WTC11 (cell line): ENCODE measurements at regions of chr6 and their contacts with region 1.

Region 1: DNA sequence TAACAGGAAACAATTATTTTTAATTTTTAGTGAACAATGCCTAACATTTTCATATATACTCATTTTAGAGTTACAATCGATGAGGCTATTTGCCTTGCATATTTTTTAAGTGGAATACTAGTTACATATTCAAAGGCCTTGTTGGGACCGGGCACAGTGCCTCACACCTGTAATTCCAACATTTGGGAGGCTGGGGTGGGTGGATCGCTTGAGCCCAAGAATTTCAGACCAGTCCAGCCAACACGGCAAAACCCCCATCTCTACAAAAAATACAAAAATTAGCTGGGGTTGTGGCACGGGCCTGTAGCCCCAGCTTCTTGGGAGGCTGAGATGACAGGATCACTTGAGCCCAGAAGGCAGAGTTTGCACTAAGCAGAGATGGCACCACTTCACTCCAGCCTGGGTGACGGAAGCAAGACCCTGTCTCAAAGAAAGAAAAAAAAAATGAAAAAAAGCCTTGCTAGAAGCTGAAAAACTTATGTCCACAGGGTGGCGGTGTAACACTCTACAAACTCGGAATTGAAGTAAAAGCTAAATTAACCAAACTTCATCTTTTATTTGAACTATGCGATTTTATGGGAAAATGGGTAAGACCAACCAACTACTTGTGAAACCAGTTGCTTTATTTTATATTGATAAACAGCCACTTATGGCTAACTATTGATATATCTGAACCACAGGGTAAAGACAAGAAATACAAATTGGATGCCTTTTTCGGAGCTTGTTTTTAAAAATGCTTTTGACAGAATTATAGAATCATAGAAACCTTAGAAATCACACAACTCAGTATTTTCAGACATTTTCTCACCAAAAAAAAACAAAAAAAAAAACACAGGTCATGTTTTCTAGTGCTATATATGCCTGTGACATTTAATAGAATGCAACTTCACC is 24.1 kb upstream of the ROS1 start:
- DNase-seq: peak; percentile 33
- ATAC-seq: peak; percentile 68
- H3K4me3 Mint-ChIP-seq: no peak overlapping the region; the same call in 1 of the 2 replicates
- H3K27ac Mint-ChIP-seq: no peak overlapping the region
- H3K4me1 Mint-ChIP-seq: peaks cover 21% of the 10 kb centered on the region
- H3K27me3 Mint-ChIP-seq: no peaks in the 10 kb centered on the region
- CTCF ChIP-seq: peak; percentile 55

Region 2: GRCh38 chr6:117215353-117216090 is 234.3 kb before region 1 on chr6:
- CTCF ChIA-PET with region 1: no interaction called
- POLR2A ChIA-PET with region 1: no interaction called
- DNase-seq: no peak
- ATAC-seq: no peak
- H3K4me3 Mint-ChIP-seq: no peak overlapping the region
- H3K27ac Mint-ChIP-seq: no peak overlapping the region
- H3K4me1 Mint-ChIP-seq: no peaks in the 10 kb centered on the region
- H3K27me3 Mint-ChIP-seq: peaks cover 4% of the 10 kb centered on the region; the same call in 1 of the 2 replicates
- CTCF ChIP-seq: no peak

Region 3: GRCh38 chr6:117425431-117426153 is 24.2 kb before region 1 on chr6 and contains the start of gene ROS1:
- CTCF ChIA-PET with region 1: no interaction called
- POLR2A ChIA-PET with region 1: no interaction called
- DNase-seq: no peak
- ATAC-seq: no peak
- H3K4me3 Mint-ChIP-seq: no peak within 1 kb of the TSS
- H3K27ac Mint-ChIP-seq: no peak within 1 kb of the TSS
- H3K4me1 Mint-ChIP-seq: no peaks in the 10 kb centered on the region
- H3K27me3 Mint-ChIP-seq: no peaks in the 10 kb centered on the region; the same call in 1 of the 2 replicates
- CTCF ChIP-seq: no peak
- total RNA-seq, gene ROS1: 0.02 to 0.05 TPM (median 0.05 TPM) in 3 replicates

Region 4: DNA sequence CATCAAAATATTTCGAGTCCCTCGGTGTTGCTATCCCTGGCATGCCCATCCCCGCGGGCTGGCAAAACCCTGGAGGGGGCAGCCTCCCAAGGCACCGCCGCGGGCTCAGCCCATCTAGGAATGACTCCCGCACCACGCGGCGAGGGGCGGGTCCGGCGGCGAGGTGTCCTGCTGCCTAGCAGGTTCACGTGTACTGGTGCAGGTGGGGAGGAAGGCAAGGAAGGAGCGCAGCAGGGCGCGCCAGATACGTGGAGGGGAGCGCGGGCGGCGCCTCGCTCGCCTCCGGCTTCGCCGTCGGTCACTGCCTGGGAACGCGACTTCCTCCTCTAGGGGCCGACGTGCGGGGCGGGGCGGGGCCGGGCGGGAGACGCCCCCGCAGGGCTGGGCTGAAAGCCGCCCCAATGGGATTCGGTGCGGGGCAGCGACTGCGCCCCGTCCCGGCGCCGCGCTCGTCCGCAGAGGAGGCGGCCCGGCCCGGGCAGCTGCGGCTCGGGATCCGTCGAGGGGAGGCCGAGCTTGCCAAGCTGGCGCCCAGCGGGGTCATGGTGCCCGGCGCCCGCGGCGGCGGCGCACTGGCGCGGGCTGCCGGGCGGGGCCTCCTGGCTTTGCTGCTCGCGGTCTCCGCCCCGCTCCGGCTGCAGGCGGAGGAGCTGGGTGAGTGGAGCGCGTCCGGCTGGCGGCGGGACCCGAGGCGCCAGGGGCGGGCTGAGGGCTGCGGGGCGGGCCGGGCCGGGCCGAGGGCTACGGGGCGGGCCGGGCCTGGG is 32.6 kb after region 1 on chr6 and contains the start of gene DCBLD1:
- CTCF ChIA-PET with region 1: interaction called, 11 read pairs
- POLR2A ChIA-PET with region 1: no interaction called
- DNase-seq: peak; percentile 78
- ATAC-seq: peak; percentile 69
- H3K4me3 Mint-ChIP-seq: peak within 1 kb of the TSS; percentile 87
- H3K27ac Mint-ChIP-seq: peak within 1 kb of the TSS; percentile 74
- H3K4me1 Mint-ChIP-seq: peaks cover 48% of the 10 kb centered on the region
- H3K27me3 Mint-ChIP-seq: peaks cover 24% of the 10 kb centered on the region
- CTCF ChIP-seq: no peak
- total RNA-seq, gene DCBLD1: 9.6 to 11.2 TPM (median 10.6 TPM) in 3 replicates

Region 5: GRCh38 chr6:117555882-117556498 is 106.2 kb after region 1 on chr6:
- CTCF ChIA-PET with region 1: interaction called, 11 read pairs
- POLR2A ChIA-PET with region 1: no interaction called
- DNase-seq: peak; percentile 38
- ATAC-seq: no peak
- H3K4me3 Mint-ChIP-seq: no peak overlapping the region
- H3K27ac Mint-ChIP-seq: no peak overlapping the region
- H3K4me1 Mint-ChIP-seq: no peaks in the 10 kb centered on the region
- H3K27me3 Mint-ChIP-seq: no peaks in the 10 kb centered on the region
- CTCF ChIP-seq: peak; percentile 86

Region 6: GRCh38 chr6:117602151-117602898 is 152.5 kb after region 1 on chr6 and contains the start of gene GOPC:
- CTCF ChIA-PET with region 1: interaction called, 10 read pairs
- POLR2A ChIA-PET with region 1: interaction called, 3 read pairs
- DNase-seq: peak; percentile 93
- ATAC-seq: peak; percentile 97
- H3K4me3 Mint-ChIP-seq: peak within 1 kb of the TSS; percentile 96
- H3K27ac Mint-ChIP-seq: peak within 1 kb of the TSS; percentile 96
- H3K4me1 Mint-ChIP-seq: peaks cover 17% of the 10 kb centered on the region
- H3K27me3 Mint-ChIP-seq: no peaks in the 10 kb centered on the region
- CTCF ChIP-seq: no peak
- total RNA-seq, gene GOPC: 18.6 to 19.4 TPM (median 18.7 TPM) in 3 replicates

Region 7: GRCh38 chr6:117829594-117830319 is 380.0 kb after region 1 on chr6:
- CTCF ChIA-PET with region 1: interaction called, 10 read pairs
- POLR2A ChIA-PET with region 1: no interaction called
- DNase-seq: peak; percentile 70
- ATAC-seq: peak; percentile 99
- H3K4me3 Mint-ChIP-seq: peak overlapping the region; percentile 76
- H3K27ac Mint-ChIP-seq: no peak overlapping the region
- H3K4me1 Mint-ChIP-seq: peaks cover 17% of the 10 kb centered on the region
- H3K27me3 Mint-ChIP-seq: no peaks in the 10 kb centered on the region
- CTCF ChIP-seq: peak; percentile 47